ENCODE measurements at regions of chr15 and their contacts with region 1.

Region 1: GRCh38 chr15:64731012-64731806 is 44.2 kb downstream of the RBPMS2 start:
- DNase-seq: peak; percentile 83 to 96
- H3K4me3 ChIP-seq: no peak overlapping the region
- CTCF ChIP-seq: peak in 1 of 3 donors; percentile 89
- POLR2A ChIP-seq: no peak

Region 2: GRCh38 chr15:64443747-64444621 is 287.2 kb before region 1 on chr15:
- intact Hi-C with region 1: no loop called
- DNase-seq: no peak
- H3K4me3 ChIP-seq: no peak overlapping the region
- CTCF ChIP-seq: no peak
- POLR2A ChIP-seq: no peak

Region 3: GRCh38 chr15:64681424-64682024 is 49.7 kb before region 1 on chr15:
- intact Hi-C with region 1: loop called (anchors 2 kb)
- DNase-seq: peak in 1 of 2 donors; percentile 80
- H3K4me3 ChIP-seq: no peak overlapping the region
- CTCF ChIP-seq: peak in 1 of 3 donors; percentile 14
- POLR2A ChIP-seq: no peak

Region 4: GRCh38 chr15:64807751-64808222 is 76.6 kb after region 1 on chr15:
- intact Hi-C with region 1: loop called (anchors 1 kb)
- DNase-seq: no peak
- H3K4me3 ChIP-seq: no peak overlapping the region
- CTCF ChIP-seq: no peak
- POLR2A ChIP-seq: no peak

Region 5: DNA sequence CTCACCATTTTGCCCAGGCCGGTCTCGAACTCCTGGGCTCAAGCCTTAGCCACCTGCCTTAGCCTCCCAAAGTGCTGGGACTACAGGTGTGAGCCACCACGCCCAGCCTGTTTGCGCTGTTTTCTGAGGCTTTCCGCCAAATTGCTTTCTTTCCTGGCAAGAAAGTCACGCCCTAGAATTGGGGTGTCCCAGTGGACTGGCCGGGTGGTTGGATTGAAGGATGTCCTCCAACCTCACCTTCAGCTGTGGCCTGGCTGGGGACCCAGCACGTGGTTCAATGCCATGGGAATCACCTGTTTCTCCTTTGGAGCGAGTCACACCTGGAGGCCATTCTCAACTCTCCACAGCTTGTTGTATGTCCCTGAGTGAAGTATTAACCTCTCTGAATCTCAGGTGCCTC is 174.7 kb after region 1 on chr15:
- intact Hi-C with region 1: loop called (anchors 2 kb)
- DNase-seq: no peak
- H3K4me3 ChIP-seq: no peak overlapping the region
- CTCF ChIP-seq: no peak
- POLR2A ChIP-seq: no peak

Region 6: GRCh38 chr15:65049418-65049840 is 318.2 kb after region 1 on chr15:
- intact Hi-C with region 1: loop called (anchors 10 kb)
- DNase-seq: peak; percentile 83 to 95
- H3K4me3 ChIP-seq: no peak overlapping the region
- CTCF ChIP-seq: no peak
- POLR2A ChIP-seq: no peak